GM12878 (cell line): ENCODE measurements at regions of chrX and their contacts with region 1.

Region 1: GRCh38 chrX:133365871-133366611 is 49.2 kb downstream of the GPC4 start:
- DNase-seq: no peak
- ATAC-seq: 0 out of 3 replicates have a peak, but pooled peaks have one; percentile 28
- H3K4me3 ChIP-seq: no peak overlapping the region
- H3K27ac ChIP-seq: no peak overlapping the region
- H3K4me1 ChIP-seq: no peaks in the 10 kb centered on the region
- H3K27me3 ChIP-seq: no peaks in the 10 kb centered on the region
- CTCF ChIP-seq: no peak
- EP300 ChIP-seq: no peak
- POLR2A ChIP-seq: no peak
- RAD21 ChIP-seq: no peak

Region 2: GRCh38 chrX:132740316-132741123 is 625.5 kb before region 1 on chrX:
- CTCF ChIA-PET with region 1: no interaction called
- POLR2A ChIA-PET with region 1: no interaction called
- RAD21 ChIA-PET with region 1: no interaction called
- SMC1A ChIA-PET with region 1: no interaction called
- in situ Hi-C with region 1: no loop called
- intact Hi-C with region 1: no loop called
- DNase-seq: no peak
- ATAC-seq: no peak
- H3K4me3 ChIP-seq: no peak overlapping the region
- H3K27ac ChIP-seq: no peak overlapping the region
- H3K4me1 ChIP-seq: no peaks in the 10 kb centered on the region
- H3K27me3 ChIP-seq: no peaks in the 10 kb centered on the region
- CTCF ChIP-seq: peak; percentile 39 to 60 (median 53); a peak in 5 of 6 replicates
- EP300 ChIP-seq: no peak
- POLR2A ChIP-seq: no peak
- RAD21 ChIP-seq: peak; percentile 51

Region 3: GRCh38 chrX:133350751-133351150 is 15.3 kb before region 1 on chrX:
- CTCF ChIA-PET with region 1: interaction called, 6 read pairs
- POLR2A ChIA-PET with region 1: interaction called, 9 read pairs
- RAD21 ChIA-PET with region 1: interaction called, 8 read pairs
- SMC1A ChIA-PET with region 1: interaction called, 35 read pairs
- in situ Hi-C with region 1: no loop called
- intact Hi-C with region 1: no loop called
- DNase-seq: no peak
- ATAC-seq: no peak
- H3K4me3 ChIP-seq: no peak overlapping the region
- H3K27ac ChIP-seq: no peak overlapping the region
- H3K4me1 ChIP-seq: no peaks in the 10 kb centered on the region
- H3K27me3 ChIP-seq: no peaks in the 10 kb centered on the region
- CTCF ChIP-seq: no peak
- EP300 ChIP-seq: no peak
- POLR2A ChIP-seq: no peak
- RAD21 ChIP-seq: no peak

Region 4: GRCh38 chrX:133380711-133381619 is 14.9 kb after region 1 on chrX:
- CTCF ChIA-PET with region 1: interaction called, 4 read pairs
- POLR2A ChIA-PET with region 1: interaction called, 5 read pairs
- RAD21 ChIA-PET with region 1: interaction called, 5 read pairs
- SMC1A ChIA-PET with region 1: interaction called, 12 read pairs
- in situ Hi-C with region 1: no loop called
- intact Hi-C with region 1: no loop called
- DNase-seq: no peak
- ATAC-seq: peak; percentile 62
- H3K4me3 ChIP-seq: no peak overlapping the region
- H3K27ac ChIP-seq: no peak overlapping the region
- H3K4me1 ChIP-seq: no peaks in the 10 kb centered on the region
- H3K27me3 ChIP-seq: no peaks in the 10 kb centered on the region
- CTCF ChIP-seq: no peak
- EP300 ChIP-seq: no peak
- POLR2A ChIP-seq: no peak
- RAD21 ChIP-seq: no peak